PC-9 (cell line): ENCODE measurements at regions of chr2 and their contacts with region 1.

Region 1: DNA sequence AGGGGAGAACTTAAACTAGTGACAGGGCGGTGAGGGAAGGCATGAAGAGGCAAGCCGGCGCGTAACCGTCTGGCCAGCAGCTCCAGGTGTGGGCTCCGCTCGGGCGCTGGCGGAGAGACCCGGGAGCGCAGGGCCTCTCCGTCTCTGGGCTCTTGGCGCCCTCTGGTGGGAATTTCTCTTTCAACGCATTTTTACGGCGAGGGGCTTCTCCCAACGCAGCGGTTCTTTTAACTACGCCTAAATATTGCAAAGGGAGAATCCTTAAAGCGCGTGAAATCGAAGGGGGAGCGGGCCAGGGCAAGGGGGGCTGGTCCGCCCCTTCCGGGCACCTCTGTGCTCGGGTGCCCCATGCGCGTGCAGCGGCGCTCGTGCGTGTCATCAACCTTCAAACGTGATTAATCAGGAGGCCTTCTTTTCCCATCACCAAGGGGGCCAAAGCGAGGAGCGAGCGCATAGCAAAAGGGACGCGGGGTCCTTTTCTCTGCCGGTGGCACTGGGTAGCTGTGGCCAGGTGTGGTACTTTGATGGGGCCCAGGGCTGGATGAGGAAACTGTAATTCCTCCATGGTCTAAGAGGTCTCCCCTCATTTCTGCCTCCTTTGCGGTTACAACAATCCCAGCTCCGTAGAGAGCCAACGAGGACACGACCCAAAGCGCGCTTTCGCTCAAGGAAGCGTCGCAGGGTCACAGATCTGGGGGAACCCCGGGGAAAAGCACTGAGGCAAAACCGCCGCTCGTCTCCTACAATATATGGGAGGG is 762 bp upstream of the GAD1 start:
- DNase-seq: peak; percentile 42 to 66
- H3K4me3 ChIP-seq: peak overlapping the region; percentile 65
- H3K27ac ChIP-seq: no peak overlapping the region
- H3K4me1 ChIP-seq: no peaks in the 10 kb centered on the region
- H3K27me3 ChIP-seq: no peaks in the 10 kb centered on the region
- CTCF ChIP-seq: peak; percentile 82

Region 2: DNA sequence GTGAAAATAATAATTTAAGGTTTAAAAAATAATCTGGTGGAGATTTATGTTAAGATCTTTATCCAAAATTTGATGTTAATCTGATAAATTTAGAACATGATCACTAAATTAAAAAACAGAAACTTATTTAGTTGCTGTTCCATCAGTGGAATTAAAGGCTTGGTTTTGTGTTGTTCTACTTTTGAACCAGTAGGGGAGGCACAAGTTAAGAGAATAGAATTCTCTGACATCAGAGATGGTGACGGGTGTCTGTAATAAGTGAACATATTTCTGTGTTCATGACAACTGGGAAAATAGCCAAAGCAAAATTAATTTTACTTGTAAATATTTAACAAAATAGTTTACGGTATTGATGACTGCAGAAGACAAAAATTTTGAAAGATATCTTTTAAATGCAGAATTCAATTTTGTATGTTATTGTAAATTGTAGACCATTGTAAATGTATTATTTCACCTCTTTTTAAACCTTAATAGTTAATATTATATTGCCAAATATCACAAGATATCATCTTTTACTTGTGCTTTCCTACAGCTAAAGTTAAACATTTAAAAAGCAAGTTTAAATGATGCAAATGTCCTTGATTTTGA is 882.7 kb before region 1 on chr2:
- CTCF ChIA-PET with region 1: interaction called, 3 read pairs
- POLR2A ChIA-PET with region 1: no interaction called
- intact Hi-C with region 1: loop called (anchors 2 kb)
- DNase-seq: no peak
- H3K4me3 ChIP-seq: no peak overlapping the region
- H3K27ac ChIP-seq: no peak overlapping the region
- H3K4me1 ChIP-seq: no peaks in the 10 kb centered on the region
- H3K27me3 ChIP-seq: no peaks in the 10 kb centered on the region
- CTCF ChIP-seq: peak; percentile 72

Region 3: GRCh38 chr2:170324640-170325046 is 491.3 kb before region 1 on chr2:
- CTCF ChIA-PET with region 1: interaction called, 5 read pairs
- POLR2A ChIA-PET with region 1: no interaction called
- intact Hi-C with region 1: loop called (anchors 1 kb)
- DNase-seq: peak; percentile 35 to 67
- H3K4me3 ChIP-seq: no peak overlapping the region
- H3K27ac ChIP-seq: no peak overlapping the region
- H3K4me1 ChIP-seq: no peaks in the 10 kb centered on the region
- H3K27me3 ChIP-seq: no peaks in the 10 kb centered on the region
- CTCF ChIP-seq: peak; percentile 81

Region 4: GRCh38 chr2:170369894-170370293 is 446.0 kb before region 1 on chr2:
- CTCF ChIA-PET with region 1: interaction called, 4 read pairs
- POLR2A ChIA-PET with region 1: interaction called, 7 read pairs
- intact Hi-C with region 1: loop called (anchors 2 kb)
- DNase-seq: no peak
- H3K4me3 ChIP-seq: no peak overlapping the region
- H3K27ac ChIP-seq: no peak overlapping the region
- H3K4me1 ChIP-seq: peaks cover 22% of the 10 kb centered on the region
- H3K27me3 ChIP-seq: no peaks in the 10 kb centered on the region
- CTCF ChIP-seq: peak; percentile 67

Region 5: GRCh38 chr2:170409164-170409535 is 406.8 kb before region 1 on chr2:
- CTCF ChIA-PET with region 1: interaction called, 11 read pairs
- POLR2A ChIA-PET with region 1: no interaction called
- intact Hi-C with region 1: no loop called
- DNase-seq: peak in 1 of 2 experiments; percentile 47
- H3K4me3 ChIP-seq: no peak overlapping the region
- H3K27ac ChIP-seq: no peak overlapping the region
- H3K4me1 ChIP-seq: peaks cover 15% of the 10 kb centered on the region
- H3K27me3 ChIP-seq: no peaks in the 10 kb centered on the region
- CTCF ChIP-seq: peak; percentile 94

Region 6: GRCh38 chr2:170715062-170715931 is 100.6 kb before region 1 on chr2 and contains the start of gene SP5:
- CTCF ChIA-PET with region 1: no interaction called
- POLR2A ChIA-PET with region 1: no interaction called
- intact Hi-C with region 1: loop called (anchors 5 kb)
- DNase-seq: peak; percentile 66 to 78
- H3K4me3 ChIP-seq: peak within 1 kb of the TSS; percentile 77
- H3K27ac ChIP-seq: no peak within 1 kb of the TSS
- H3K4me1 ChIP-seq: no peaks in the 10 kb centered on the region
- H3K27me3 ChIP-seq: no peaks in the 10 kb centered on the region
- CTCF ChIP-seq: no peak
- total RNA-seq, gene SP5: 1.9 and 7.3 TPM in 2 replicates

Region 7: DNA sequence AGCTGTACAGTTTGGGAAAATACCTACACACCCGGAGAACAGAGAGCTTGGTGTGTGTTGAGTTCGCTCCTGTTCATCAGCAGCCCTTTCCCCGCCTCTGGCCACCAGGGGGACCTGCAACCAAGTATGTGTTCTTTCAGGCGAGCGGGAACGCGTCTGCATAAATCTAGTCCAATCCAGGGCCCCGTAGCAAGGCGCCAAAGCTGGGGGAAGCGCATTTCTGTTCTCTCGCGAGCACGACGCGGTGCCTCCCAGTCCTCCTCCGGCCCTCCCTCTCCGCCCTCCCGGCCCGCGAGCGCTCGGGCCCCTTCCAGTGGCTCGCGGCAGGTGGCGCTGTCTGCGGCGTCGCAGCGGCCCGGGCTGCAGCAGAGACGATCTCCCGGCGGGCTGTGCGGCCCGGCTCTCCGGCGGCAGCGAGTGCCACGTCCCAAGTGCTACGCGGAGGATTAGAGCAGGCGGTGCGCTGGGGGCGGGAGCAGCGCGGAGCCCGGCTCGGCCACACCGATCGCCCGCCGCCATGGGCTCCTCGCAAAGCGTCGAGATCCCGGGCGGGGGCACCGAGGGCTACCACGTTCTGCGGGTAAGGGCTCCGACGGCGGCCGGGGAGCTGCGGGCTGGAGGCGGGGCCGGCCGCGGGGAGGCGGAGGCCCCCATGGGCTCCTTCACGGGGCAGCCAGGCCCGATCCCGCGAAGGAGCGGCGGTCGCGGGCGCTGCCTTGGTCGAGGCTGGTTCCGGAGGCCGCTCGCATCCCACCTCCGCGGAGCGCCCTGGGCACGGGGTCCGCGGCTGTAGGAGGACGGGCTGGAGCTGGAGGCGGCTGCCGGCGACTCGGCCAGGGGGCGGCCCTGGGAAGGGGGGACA is 113.1 kb after region 1 on chr2 and contains the start of gene GORASP2:
- CTCF ChIA-PET with region 1: no interaction called
- POLR2A ChIA-PET with region 1: no interaction called
- intact Hi-C with region 1: loop called (anchors 2 kb)
- DNase-seq: peak; percentile 98 to 99
- H3K4me3 ChIP-seq: peak within 1 kb of the TSS; percentile 94
- H3K27ac ChIP-seq: peak within 1 kb of the TSS; percentile 89
- H3K4me1 ChIP-seq: peaks cover 29% of the 10 kb centered on the region
- H3K27me3 ChIP-seq: no peaks in the 10 kb centered on the region
- CTCF ChIP-seq: peak; percentile 93
- total RNA-seq, gene GORASP2: 74.7 and 110 TPM in 2 replicates

Region 8: DNA sequence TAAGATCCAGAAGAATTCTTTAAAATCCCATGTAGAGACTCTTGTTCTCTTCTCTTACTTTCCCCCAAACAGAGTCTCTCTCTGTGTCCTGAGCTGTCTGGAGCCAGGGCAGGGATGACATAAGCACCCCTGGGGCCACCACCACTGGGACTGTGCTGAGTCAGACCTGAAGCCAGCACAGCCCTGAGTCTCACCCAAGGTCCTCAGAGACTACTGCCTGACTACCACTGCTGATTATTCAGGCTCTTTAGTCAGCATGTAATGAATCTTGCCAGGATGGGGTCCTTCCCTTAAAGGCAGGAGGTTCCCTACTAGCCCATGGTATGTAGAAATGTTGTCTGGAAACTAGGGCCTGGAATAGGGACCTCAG is 836.5 kb after region 1 on chr2:
- CTCF ChIA-PET with region 1: no interaction called
- POLR2A ChIA-PET with region 1: no interaction called
- intact Hi-C with region 1: no loop called
- DNase-seq: no peak
- H3K4me3 ChIP-seq: no peak overlapping the region
- H3K27ac ChIP-seq: no peak overlapping the region
- H3K4me1 ChIP-seq: no peaks in the 10 kb centered on the region
- H3K27me3 ChIP-seq: peaks cover 24% of the 10 kb centered on the region
- CTCF ChIP-seq: no peak